BJ (cell line): ENCODE measurements at regions of chr19 and their contacts with region 1.

Region 1: DNA sequence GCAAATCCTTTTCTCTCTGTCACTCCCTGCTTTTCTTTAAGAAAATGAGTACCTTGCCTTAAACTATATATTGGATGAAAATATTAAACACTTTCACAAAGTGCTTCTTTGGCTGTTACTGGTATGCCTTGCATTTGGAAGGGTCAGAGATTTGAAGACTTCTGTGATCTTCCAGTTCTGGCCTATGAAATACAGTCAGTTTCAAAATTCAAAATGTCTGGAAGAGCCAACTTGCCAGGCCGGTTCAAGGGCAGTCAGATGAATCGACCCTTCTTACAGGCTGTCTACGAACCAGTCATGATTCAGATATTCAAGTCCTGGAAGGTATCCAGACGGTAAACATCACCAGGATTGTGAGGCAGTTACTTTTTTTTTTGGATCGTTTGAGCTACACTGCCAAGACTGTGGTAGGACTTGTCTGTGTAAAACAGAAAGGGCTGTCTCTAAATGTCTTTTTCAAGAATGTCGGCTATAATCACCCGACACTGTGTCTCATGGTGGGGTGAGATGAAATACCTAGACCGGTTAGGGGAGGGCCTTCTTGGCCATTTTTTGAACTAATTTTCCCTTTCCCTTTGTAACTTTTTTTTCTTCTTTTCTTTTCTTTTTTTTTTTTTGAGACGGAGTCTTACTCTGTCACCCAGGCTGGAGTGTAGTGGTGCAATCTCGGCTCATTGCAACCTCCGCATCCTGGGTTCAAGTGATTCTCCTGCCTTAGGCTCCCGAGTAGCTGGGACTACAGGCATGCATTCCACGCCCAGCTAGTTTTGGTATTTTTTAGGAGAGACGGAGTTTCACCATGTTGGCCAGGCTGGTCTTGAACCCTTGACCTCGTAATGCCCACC is 11.2 kb downstream of the ACTN4 start:
- DNase-seq: peak; percentile 99
- H3K4me3 ChIP-seq: peak overlapping the region; percentile 3; the same call in 1 of the 2 replicates
- H3K27me3 ChIP-seq: no peaks in the 10 kb centered on the region
- CTCF ChIP-seq: no peak

Region 2: DNA sequence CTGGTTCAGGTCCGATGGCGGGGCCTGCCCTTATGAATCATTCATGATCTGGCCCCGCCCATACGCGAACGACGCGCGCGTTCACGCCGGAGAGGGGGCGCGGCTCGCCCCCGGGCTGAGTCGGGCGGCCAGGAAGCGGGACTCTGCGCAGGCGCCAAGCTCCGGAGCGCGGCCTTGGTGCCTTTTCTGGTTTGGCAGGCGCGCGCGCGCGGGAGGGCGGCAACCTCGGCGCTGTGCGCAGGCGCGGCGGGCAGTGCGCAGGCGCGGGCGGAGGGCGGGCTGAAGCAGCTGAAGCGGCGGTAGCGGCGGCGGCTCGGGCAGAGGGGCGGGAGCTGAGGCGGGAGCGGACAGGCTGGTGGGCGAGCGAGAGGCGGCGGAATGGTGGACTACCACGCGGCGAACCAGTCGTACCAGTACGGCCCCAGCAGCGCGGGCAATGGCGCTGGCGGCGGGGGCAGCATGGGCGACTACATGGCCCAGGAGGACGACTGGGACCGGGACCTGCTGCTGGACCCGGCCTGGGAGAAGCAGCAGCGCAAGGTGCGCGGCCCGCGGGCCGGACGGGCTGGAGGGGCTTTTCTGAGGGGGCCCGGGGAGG is 11.2 kb before region 1 on chr19 and contains the start of gene ACTN4:
- CTCF ChIA-PET with region 1: interaction called, 3 read pairs
- POLR2A ChIA-PET with region 1: interaction called, 11 read pairs
- DNase-seq: peak; percentile 74
- H3K4me3 ChIP-seq: peak within 1 kb of the TSS; percentile 100
- H3K27me3 ChIP-seq: no peaks in the 10 kb centered on the region
- CTCF ChIP-seq: no peak
- polyA plus RNA-seq, gene ACTN4: 592 and 970 TPM in 2 replicates

Region 3: GRCh38 chr19:38831142-38831605 is 172.5 kb after region 1 on chr19:
- CTCF ChIA-PET with region 1: no interaction called
- POLR2A ChIA-PET with region 1: interaction called, 13 read pairs
- DNase-seq: peak; percentile 85
- H3K4me3 ChIP-seq: peak overlapping the region; percentile 61
- H3K27me3 ChIP-seq: no peaks in the 10 kb centered on the region
- CTCF ChIP-seq: no peak

Region 4: GRCh38 chr19:38862321-38863059 is 203.8 kb after region 1 on chr19:
- CTCF ChIA-PET with region 1: no interaction called
- POLR2A ChIA-PET with region 1: no interaction called
- DNase-seq: peak; percentile 84
- H3K4me3 ChIP-seq: no peak overlapping the region
- H3K27me3 ChIP-seq: no peaks in the 10 kb centered on the region
- CTCF ChIP-seq: no peak